ENCODE measurements at regions of chr22 and their contacts with region 1.

Region 1: GRCh38 chr22:27775758-27776649 is 25.6 kb downstream of the MN1 start:
- DNase-seq: no peak
- H3K4me3 ChIP-seq: peak overlapping the region; percentile 35 to 51
- H3K27ac ChIP-seq: peak overlapping the region; percentile 92 to 96
- H3K4me1 ChIP-seq: peaks cover 14 to 47% of the 10 kb centered on the region in 2 donors
- H3K27me3 ChIP-seq: no peaks in the 10 kb centered on the region
- CTCF ChIP-seq: no peak

Region 2: DNA sequence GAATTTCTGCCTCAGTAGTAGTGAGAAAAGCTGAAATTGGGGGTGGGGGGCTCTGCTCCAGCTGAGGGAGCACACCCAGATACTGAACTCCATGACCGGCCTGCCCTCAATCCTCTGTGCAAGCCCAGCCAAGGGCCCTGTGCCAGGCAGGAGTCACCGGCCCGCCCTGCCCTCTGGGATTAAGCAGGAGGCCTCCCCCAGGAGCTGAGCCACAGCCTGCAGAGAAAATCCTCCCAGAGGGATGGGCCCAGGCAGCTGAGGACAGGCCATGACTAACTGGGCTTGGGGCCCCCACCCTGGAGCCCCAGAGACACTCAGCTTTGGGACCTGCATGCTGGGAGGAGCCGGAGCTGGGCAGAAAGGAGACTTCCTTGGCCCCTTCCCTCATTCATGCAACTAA is 23.2 kb before region 1 on chr22:
- intact Hi-C with region 1: loop called (anchors 2 kb)
- DNase-seq: peak; percentile 45 to 88
- H3K4me3 ChIP-seq: no peak overlapping the region
- H3K27ac ChIP-seq: peak overlapping the region; percentile 86 to 88
- H3K4me1 ChIP-seq: peaks cover 26 to 72% of the 10 kb centered on the region in 2 donors
- H3K27me3 ChIP-seq: no peaks in the 10 kb centered on the region
- CTCF ChIP-seq: no peak

Region 3: GRCh38 chr22:27765706-27766291 is 10.2 kb before region 1 on chr22:
- intact Hi-C with region 1: no loop called
- DNase-seq: no peak
- H3K4me3 ChIP-seq: no peak overlapping the region
- H3K27ac ChIP-seq: no peak overlapping the region
- H3K4me1 ChIP-seq: peaks cover 6 to 11% of the 10 kb centered on the region in 2 donors
- H3K27me3 ChIP-seq: no peaks in the 10 kb centered on the region
- CTCF ChIP-seq: no peak